PC-3 (cell line): ENCODE measurements at regions of chr21 and their contacts with region 1.

Region 1: DNA sequence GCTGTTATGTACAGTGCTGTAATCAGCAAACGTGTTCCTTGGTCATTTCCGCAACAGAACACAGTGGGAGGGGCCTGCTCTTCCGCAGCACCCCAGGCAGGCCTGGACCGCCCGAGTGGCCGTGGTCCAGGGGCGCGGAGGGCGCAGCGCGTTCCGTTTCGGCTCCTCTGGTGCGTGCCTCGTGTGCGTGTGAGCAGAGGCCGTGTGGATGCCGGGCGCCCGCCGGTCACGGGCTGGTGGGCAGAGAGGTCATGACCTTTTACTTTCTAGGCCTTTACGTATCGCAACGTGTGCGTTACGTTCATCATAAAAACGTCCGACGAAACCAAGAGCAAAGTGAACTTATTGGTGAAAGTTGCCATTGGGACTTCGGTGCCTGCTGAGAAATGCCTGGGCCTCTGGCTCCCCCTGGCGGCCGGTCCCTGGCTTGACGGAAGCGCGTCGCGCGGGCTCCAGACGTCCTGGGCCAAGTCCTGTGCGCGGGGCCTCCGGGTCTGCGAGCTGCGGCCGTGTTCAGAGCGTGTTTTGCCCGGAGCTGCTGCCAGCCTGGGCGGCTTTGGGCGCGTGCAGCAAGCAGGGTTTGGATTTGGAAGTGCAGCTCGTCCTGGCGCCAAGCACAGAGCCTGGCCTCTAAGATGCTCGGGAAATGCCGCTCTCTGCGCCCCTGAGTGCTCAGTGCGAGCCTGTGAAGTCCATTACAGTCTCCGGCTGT is 34.4 kb downstream of the COL18A1 start:
- DNase-seq: peak; percentile 90
- ATAC-seq: peak; percentile 89
- H3K4me3 ChIP-seq: peak overlapping the region; percentile 58
- H3K27ac ChIP-seq: peak overlapping the region; percentile 44
- H3K4me1 ChIP-seq: peaks cover 6% of the 10 kb centered on the region; the same call in 1 of the 2 replicates
- H3K27me3 ChIP-seq: no peaks in the 10 kb centered on the region
- CTCF ChIP-seq: peak; percentile 94

Region 2: GRCh38 chr21:44375281-44375651 is 1064.1 kb before region 1 on chr21:
- CTCF ChIA-PET with region 1: no interaction called
- POLR2A ChIA-PET with region 1: no interaction called
- intact Hi-C with region 1: no loop called
- DNase-seq: no peak
- ATAC-seq: no peak
- H3K4me3 ChIP-seq: no peak overlapping the region
- H3K27ac ChIP-seq: no peak overlapping the region
- H3K4me1 ChIP-seq: peaks cover 5% of the 10 kb centered on the region; the same call in 1 of the 2 replicates
- H3K27me3 ChIP-seq: peaks cover 4% of the 10 kb centered on the region; the same call in 1 of the 2 replicates
- CTCF ChIP-seq: no peak

Region 3: DNA sequence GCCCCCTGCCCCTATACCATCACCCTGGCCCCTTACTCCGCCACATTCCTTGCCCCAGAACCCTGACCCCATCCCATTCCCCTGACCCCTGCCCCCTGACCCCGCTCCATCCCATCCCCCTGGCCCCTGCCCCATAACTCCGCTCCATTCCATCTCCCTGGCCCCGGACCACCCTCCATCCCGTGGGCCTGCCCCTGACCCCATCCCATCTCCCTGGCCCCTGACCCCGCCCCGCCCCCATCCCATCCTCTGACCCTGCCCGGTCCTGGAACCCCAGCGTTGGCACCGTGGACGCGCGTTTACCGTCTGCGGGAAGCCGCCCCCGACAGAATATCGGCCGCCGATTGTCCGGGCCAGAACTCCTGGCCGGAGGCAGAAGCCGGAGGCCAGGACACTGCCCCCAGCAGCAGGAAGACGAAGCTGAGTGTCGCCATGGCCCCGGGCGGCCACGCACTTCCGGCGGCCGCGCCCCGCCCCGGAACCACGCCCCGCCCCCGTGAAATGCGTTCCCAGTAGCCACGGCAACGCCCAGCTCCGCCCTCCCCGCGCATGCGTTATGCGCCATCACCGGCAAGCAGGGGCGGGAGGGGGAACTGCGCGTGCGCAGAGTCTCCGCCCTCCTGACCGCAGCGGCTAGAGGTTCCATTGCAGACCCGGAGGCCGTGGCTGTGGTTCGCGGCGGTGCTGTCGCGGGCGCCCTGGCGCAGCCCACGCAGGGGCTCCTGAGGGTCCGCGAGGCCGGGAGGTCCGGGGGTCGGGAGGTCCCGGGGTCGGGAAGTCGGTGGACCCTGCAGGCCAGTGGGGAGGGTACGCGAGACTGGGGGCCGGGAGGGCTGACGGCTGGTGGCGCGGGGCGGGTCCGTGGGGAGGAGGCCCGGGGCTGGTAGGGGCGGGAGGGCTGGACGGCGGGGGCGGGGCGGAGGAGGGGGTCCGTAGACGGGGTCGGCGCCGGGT is 151.6 kb before region 1 on chr21 and contains the start of gene POFUT2:
- CTCF ChIA-PET with region 1: no interaction called
- POLR2A ChIA-PET with region 1: no interaction called
- intact Hi-C with region 1: loop called (anchors 1 kb)
- DNase-seq: peak; percentile 98
- ATAC-seq: peak; percentile 65
- H3K4me3 ChIP-seq: peak within 1 kb of the TSS; percentile 92
- H3K27ac ChIP-seq: no peak within 1 kb of the TSS
- H3K4me1 ChIP-seq: peaks cover 16% of the 10 kb centered on the region
- H3K27me3 ChIP-seq: no peaks in the 10 kb centered on the region
- CTCF ChIP-seq: no peak
- total RNA-seq, gene POFUT2: 19.6 and 28.2 TPM in 2 replicates

Region 4: GRCh38 chr21:45386721-45387371 is 52.5 kb before region 1 on chr21:
- CTCF ChIA-PET with region 1: no interaction called
- POLR2A ChIA-PET with region 1: no interaction called
- intact Hi-C with region 1: loop called (anchors 2 kb)
- DNase-seq: peak; percentile 75
- ATAC-seq: peak; percentile 88
- H3K4me3 ChIP-seq: no peak overlapping the region
- H3K27ac ChIP-seq: peak overlapping the region; percentile 35
- H3K4me1 ChIP-seq: peaks cover 15% of the 10 kb centered on the region
- H3K27me3 ChIP-seq: no peaks in the 10 kb centered on the region
- CTCF ChIP-seq: peak; percentile 53; the same call in 1 of the 2 replicates